SK-N-SH (cell line): ENCODE measurements at regions of chr7 and their contacts with region 1.

Region 1: GRCh38 chr7:119197877-119198527 is 973.5 kb downstream of the ANKRD7 start:
- DNase-seq: peak; percentile 36
- H3K4me3 ChIP-seq: no peak overlapping the region
- H3K27ac ChIP-seq: no peak overlapping the region
- H3K4me1 ChIP-seq: peaks cover 0 to 5% of the 10 kb centered on the region in 2 experiments; a peak in 1 of 4 replicates
- H3K27me3 ChIP-seq: no peaks in the 10 kb centered on the region
- CTCF ChIP-seq: peak; percentile 94
- EP300 ChIP-seq: no peak
- RAD21 ChIP-seq: peak; percentile 83

Region 2: GRCh38 chr7:118352854-118353453 is 845.0 kb before region 1 on chr7:
- CTCF ChIA-PET with region 1: interaction called, 36 read pairs
- POLR2A ChIA-PET with region 1: no interaction called
- DNase-seq: peak; percentile 16
- H3K4me3 ChIP-seq: no peak overlapping the region
- H3K27ac ChIP-seq: no peak overlapping the region
- H3K4me1 ChIP-seq: no peaks in the 10 kb centered on the region
- H3K27me3 ChIP-seq: no peaks in the 10 kb centered on the region
- CTCF ChIP-seq: peak; percentile 57
- EP300 ChIP-seq: no peak
- RAD21 ChIP-seq: peak; percentile 88

Region 3: GRCh38 chr7:118918556-118918955 is 279.4 kb before region 1 on chr7:
- CTCF ChIA-PET with region 1: interaction called, 73 read pairs
- POLR2A ChIA-PET with region 1: no interaction called
- DNase-seq: peak; percentile 1
- H3K4me3 ChIP-seq: no peak overlapping the region
- H3K27ac ChIP-seq: no peak overlapping the region
- H3K4me1 ChIP-seq: no peaks in the 10 kb centered on the region
- H3K27me3 ChIP-seq: no peaks in the 10 kb centered on the region
- CTCF ChIP-seq: peak; percentile 71
- EP300 ChIP-seq: no peak
- RAD21 ChIP-seq: peak; percentile 83

Region 4: DNA sequence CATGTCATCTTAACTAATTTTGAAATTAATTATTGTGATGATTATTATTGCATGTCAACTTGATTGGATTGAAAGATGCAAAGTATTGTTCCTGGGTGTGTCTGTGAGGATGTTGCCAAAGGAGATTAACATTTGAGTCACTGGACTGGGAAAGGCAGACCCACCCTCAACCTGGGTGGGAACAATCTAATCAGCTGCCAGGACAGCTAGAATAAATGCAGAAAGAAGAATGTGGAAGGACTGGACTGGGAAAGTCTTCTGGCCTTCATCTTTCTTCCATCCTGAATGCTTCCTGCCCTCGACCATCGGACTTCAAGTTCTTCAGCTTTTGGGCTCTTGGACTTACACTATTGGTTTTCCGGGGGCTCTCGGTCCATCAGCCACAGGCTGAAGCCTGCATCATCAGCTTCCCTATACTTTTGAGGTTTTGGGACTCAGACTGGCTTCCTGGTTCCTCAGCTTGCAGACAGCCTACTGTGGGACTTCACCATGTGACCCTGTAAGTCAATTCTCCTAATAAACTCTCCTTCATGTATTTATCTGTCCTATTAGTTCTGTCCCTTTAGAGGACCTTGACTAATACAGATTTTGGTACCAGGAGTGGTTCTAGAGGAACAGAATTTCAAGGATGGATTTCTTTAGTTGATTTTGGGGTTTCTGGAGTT is 13.7 kb before region 1 on chr7:
- CTCF ChIA-PET with region 1: interaction called, 13 read pairs
- POLR2A ChIA-PET with region 1: no interaction called
- DNase-seq: no peak
- H3K4me3 ChIP-seq: no peak overlapping the region
- H3K27ac ChIP-seq: no peak overlapping the region
- H3K4me1 ChIP-seq: no peaks in the 10 kb centered on the region
- H3K27me3 ChIP-seq: no peaks in the 10 kb centered on the region
- CTCF ChIP-seq: no peak
- EP300 ChIP-seq: no peak
- RAD21 ChIP-seq: no peak